Activated naive CD4-positive, alpha-beta T cell treated with anti-CD3 and anti-CD28 coated beads for 36 hours (primary cell): ENCODE measurements at regions of chr11 and their contacts with region 1.

Region 1: GRCh38 chr11:75248690-75249268 is 8.2 kb downstream of the TPBGL start:
- DNase-seq: peak; percentile 95
- H3K4me3 Mint-ChIP-seq: no peak overlapping the region
- H3K27ac Mint-ChIP-seq: no peak overlapping the region
- H3K4me1 Mint-ChIP-seq: no peaks in the 10 kb centered on the region
- H3K27me3 Mint-ChIP-seq: peaks cover 3% of the 10 kb centered on the region

Region 2: GRCh38 chr11:74948898-74949747 is 299.7 kb before region 1 on chr11 and contains the starts of genes SPCS2 and XRRA1:
- CTCF ChIA-PET with region 1: interaction called, 3 read pairs
- intact Hi-C with region 1: loop called (anchors 2 kb)
- DNase-seq: peak; percentile 100
- H3K4me3 Mint-ChIP-seq: peak within 1 kb of the TSS; percentile 98
- H3K27ac Mint-ChIP-seq: peak within 1 kb of the TSS; percentile 89
- H3K4me1 Mint-ChIP-seq: peaks cover 36% of the 10 kb centered on the region
- H3K27me3 Mint-ChIP-seq: no peaks in the 10 kb centered on the region
- total RNA-seq, gene SPCS2: 77.6 to 83.3 TPM
- total RNA-seq, gene XRRA1: 5.0 to 9.5 TPM

Region 3: GRCh38 chr11:75204685-75205563 is 43.9 kb before region 1 on chr11:
- CTCF ChIA-PET with region 1: interaction called, 17 read pairs
- intact Hi-C with region 1: loop called (anchors 1 kb)
- DNase-seq: peak; percentile 93
- H3K4me3 Mint-ChIP-seq: no peak overlapping the region
- H3K27ac Mint-ChIP-seq: no peak overlapping the region
- H3K4me1 Mint-ChIP-seq: no peaks in the 10 kb centered on the region
- H3K27me3 Mint-ChIP-seq: no peaks in the 10 kb centered on the region

Region 4: GRCh38 chr11:75233742-75234172 is 15.0 kb before region 1 on chr11:
- CTCF ChIA-PET with region 1: interaction called, 47 read pairs
- intact Hi-C with region 1: no loop called
- DNase-seq: peak; percentile 52
- H3K4me3 Mint-ChIP-seq: no peak overlapping the region
- H3K27ac Mint-ChIP-seq: no peak overlapping the region
- H3K4me1 Mint-ChIP-seq: no peaks in the 10 kb centered on the region
- H3K27me3 Mint-ChIP-seq: peaks cover 1% of the 10 kb centered on the region

Region 5: DNA sequence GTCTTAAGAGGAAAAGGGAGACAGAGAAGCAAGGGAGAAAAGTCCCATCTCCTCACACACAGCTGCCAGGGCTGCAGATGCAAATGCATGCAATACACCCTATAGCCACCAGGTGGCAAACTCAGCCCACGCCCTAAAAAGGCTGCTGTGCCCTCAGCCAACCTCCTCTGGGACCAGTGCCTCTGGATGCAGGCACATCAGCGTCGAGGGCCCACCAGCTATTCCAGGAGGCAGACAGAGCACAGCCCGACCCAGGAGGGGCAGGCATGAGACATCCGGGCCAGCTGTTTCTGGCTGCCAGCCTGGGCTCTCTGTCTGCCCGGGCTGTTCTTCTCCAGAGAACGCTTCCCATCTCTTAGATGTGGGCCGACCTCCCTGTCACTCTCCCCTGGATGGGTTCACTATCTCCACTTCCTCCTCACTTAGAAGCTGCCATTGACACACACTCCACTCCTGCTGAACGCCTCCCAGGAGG is 31.5 kb after region 1 on chr11:
- CTCF ChIA-PET with region 1: interaction called, 10 read pairs
- intact Hi-C with region 1: no loop called
- DNase-seq: peak; percentile 86
- H3K4me3 Mint-ChIP-seq: no peak overlapping the region
- H3K27ac Mint-ChIP-seq: peak overlapping the region; percentile 73
- H3K4me1 Mint-ChIP-seq: peaks cover 38% of the 10 kb centered on the region
- H3K27me3 Mint-ChIP-seq: no peaks in the 10 kb centered on the region